ENCODE measurements at regions of chr6 and their contacts with region 1.

Region 1: GRCh38 chr6:137866914-137867684 is at the start of gene TNFAIP3:
- DNase-seq: peak; percentile 79 to 97
- H3K4me3 ChIP-seq: peak within 1 kb of the TSS; percentile 90 to 93
- H3K27ac ChIP-seq: peak within 1 kb of the TSS; percentile 82 to 89
- H3K4me1 ChIP-seq: peaks cover 0 to 13% of the 10 kb centered on the region in 2 donors
- H3K27me3 ChIP-seq: no peaks in the 10 kb centered on the region
- CTCF ChIP-seq: peak; percentile 48 to 90 (median 59)
- total RNA-seq, gene TNFAIP3: 24.5 TPM

Region 2: GRCh38 chr6:136289579-136290409 is 1577.3 kb before region 1 on chr6 and contains the start of gene BCLAF1:
- intact Hi-C with region 1: loop called (anchors 5 kb)
- DNase-seq: peak; percentile 99 to 100
- H3K4me3 ChIP-seq: peak within 1 kb of the TSS; percentile 76 to 83
- H3K27ac ChIP-seq: peak within 1 kb of the TSS; percentile 98 to 99
- H3K4me1 ChIP-seq: peaks cover 13 to 22% of the 10 kb centered on the region in 2 donors
- H3K27me3 ChIP-seq: no peaks in the 10 kb centered on the region
- CTCF ChIP-seq: no peak
- total RNA-seq, gene BCLAF1: 42.6 TPM

Region 3: DNA sequence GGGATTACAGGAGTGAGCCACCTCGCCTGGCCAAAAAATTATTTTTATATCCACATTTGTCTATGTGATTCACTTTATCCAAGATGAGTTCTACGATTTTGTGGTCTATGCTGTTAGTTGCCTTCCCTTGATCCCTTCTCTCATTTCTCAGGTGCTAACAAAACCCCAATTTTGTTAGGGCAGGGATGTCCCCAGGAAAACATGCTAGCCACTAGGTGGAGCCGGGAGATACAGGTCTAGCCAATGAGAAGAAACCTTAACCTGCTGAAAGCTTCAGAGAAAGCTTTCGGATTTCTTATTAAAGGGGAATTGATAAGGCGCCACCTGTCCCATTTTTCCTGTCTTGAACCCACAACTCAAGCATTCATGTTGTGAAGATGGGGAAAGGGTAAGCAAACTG is 205.5 kb before region 1 on chr6:
- intact Hi-C with region 1: no loop called
- DNase-seq: no peak
- H3K4me3 ChIP-seq: no peak overlapping the region
- H3K27ac ChIP-seq: no peak overlapping the region
- H3K4me1 ChIP-seq: no peaks in the 10 kb centered on the region
- H3K27me3 ChIP-seq: no peaks in the 10 kb centered on the region
- CTCF ChIP-seq: peak in 1 of 3 experiments; percentile 29

Region 4: DNA sequence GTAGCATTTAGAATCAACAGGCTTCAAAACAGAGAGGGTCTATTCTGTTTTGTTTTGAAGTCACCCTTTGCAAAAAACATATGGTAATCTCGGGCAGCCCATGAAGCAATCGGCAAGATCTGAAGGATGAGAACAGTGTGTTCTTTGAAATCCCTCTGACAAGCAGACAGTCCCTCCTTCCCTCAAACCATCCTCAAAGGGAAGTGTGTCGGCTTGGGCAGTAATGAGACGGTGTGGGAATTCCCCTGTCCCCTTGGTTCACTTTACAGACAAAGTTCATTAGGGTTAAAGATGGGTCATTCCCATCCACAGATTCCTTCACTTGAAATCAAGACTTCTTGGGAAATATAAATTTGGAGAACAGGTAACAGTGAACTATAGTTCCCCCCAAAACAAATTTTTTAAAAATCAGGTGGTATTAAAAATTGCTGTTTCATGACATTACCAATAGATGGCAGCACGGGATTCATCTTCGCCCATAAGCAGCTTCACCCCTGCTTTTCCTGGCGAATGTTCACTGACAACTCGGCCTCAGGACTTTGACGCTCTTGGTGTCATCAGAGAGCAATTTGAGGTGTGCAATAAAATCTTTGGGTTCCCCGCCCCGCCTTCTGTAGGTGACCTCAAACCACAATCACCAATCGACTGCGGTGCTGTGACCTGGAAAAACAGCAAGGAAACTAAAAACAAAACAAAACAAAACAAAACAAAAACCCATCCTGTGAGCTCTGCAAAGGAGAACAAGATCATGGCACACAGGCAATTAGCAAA is 159.3 kb before region 1 on chr6:
- intact Hi-C with region 1: loop called (anchors 2 kb)
- DNase-seq: peak in 1 of 2 donors; percentile 79
- H3K4me3 ChIP-seq: no peak overlapping the region
- H3K27ac ChIP-seq: no peak overlapping the region
- H3K4me1 ChIP-seq: peaks cover 0 to 3% of the 10 kb centered on the region in 2 donors
- H3K27me3 ChIP-seq: no peaks in the 10 kb centered on the region
- CTCF ChIP-seq: peak; percentile 52 to 73 (median 56)

Region 5: GRCh38 chr6:137944793-137945498 is 77.8 kb after region 1 on chr6:
- intact Hi-C with region 1: loop called (anchors 5 kb)
- DNase-seq: no peak
- H3K4me3 ChIP-seq: no peak overlapping the region
- H3K27ac ChIP-seq: no peak overlapping the region
- H3K4me1 ChIP-seq: no peaks in the 10 kb centered on the region
- H3K27me3 ChIP-seq: no peaks in the 10 kb centered on the region
- CTCF ChIP-seq: peak; percentile 59 to 73 (median 72)

Region 6: GRCh38 chr6:138403801-138404661 is 536.9 kb after region 1 on chr6 and contains the start of gene HEBP2:
- intact Hi-C with region 1: loop called (anchors 10 kb)
- DNase-seq: peak; percentile 78 to 96
- H3K4me3 ChIP-seq: peak within 1 kb of the TSS; percentile 68 to 93
- H3K27ac ChIP-seq: peak within 1 kb of the TSS; percentile 91 to 95
- H3K4me1 ChIP-seq: peaks cover 0 to 5% of the 10 kb centered on the region in 2 donors
- H3K27me3 ChIP-seq: no peaks in the 10 kb centered on the region
- CTCF ChIP-seq: peak; percentile 40 to 49 (median 47)
- total RNA-seq, gene HEBP2: 63.2 TPM

Measured in ascending aorta (tissue), 2 donors.